Activated T-helper 1 cell treated with anti-CD3 and anti-CD28 coated beads, Interleukin-12 subunit alpha, Interleukin-12 subunit beta, Interleukin-2, Interleukin-4 antibody, amounts not matched to agents 30 ng/mL and 10 ng/mL and 1 ng/mL, durations not matched to agents 14 hours and 24 hours and 36 hours (primary cell): ENCODE measurements at regions of chr6 and their contacts with region 1.

Region 1: DNA sequence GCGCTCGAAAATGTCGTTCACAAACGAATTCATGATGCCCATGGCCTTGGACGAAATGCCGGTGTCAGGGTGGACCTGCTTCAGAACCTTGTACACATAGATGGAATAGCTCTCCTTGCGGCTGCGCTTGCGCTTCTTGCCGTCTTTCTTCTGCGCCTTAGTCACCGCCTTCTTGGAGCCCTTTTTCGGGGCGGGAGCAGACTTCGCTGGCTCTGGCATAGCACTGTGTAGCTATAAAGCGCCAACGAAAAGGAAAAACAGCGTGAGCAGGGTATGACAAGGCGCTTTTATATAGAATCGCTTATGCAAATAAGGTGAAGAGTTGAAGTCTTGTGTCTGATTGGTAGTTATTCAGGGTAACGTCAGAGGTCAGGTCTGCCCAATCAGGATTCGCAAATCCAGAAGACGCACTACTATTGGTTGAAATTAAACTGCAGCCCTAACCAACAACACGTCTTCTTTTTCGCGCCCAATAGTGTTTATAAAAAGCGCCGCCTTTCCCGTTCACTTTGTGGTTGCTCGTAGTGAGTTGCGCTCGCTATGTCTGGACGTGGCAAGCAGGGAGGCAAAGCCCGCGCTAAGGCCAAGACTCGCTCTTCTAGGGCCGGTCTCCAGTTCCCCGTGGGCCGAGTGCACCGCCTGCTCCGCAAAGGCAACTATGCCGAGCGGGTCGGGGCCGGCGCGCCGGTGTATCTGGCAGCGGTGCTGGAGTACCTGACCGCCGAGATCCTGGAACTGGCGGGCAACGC is 114.8 kb upstream of the PRSS16 start:
- DNase-seq: peak; percentile 92
- H3K4me3 Mint-ChIP-seq: no peak overlapping the region
- H3K27ac Mint-ChIP-seq: no peak overlapping the region
- H3K4me1 Mint-ChIP-seq: peaks cover 34% of the 10 kb centered on the region
- H3K27me3 Mint-ChIP-seq: no peaks in the 10 kb centered on the region

Region 2: GRCh38 chr6:26122793-26123674 is 1009.7 kb before region 1 on chr6:
- intact Hi-C with region 1: loop called (anchors 1 kb)
- DNase-seq: peak; percentile 86
- H3K4me3 Mint-ChIP-seq: peak overlapping the region; percentile 99
- H3K27ac Mint-ChIP-seq: peak overlapping the region; percentile 100
- H3K4me1 Mint-ChIP-seq: peaks cover 49% of the 10 kb centered on the region
- H3K27me3 Mint-ChIP-seq: peaks cover 3% of the 10 kb centered on the region

Region 3: GRCh38 chr6:26596579-26597388 is 535.9 kb before region 1 on chr6 and contains the start of gene ABT1:
- intact Hi-C with region 1: loop called (anchors 2 kb)
- DNase-seq: peak; percentile 97
- H3K4me3 Mint-ChIP-seq: no peak within 1 kb of the TSS
- H3K27ac Mint-ChIP-seq: no peak within 1 kb of the TSS
- H3K4me1 Mint-ChIP-seq: peaks cover 39% of the 10 kb centered on the region
- H3K27me3 Mint-ChIP-seq: peaks cover 27% of the 10 kb centered on the region
- total RNA-seq, gene ABT1: 32.6 and 32.9 TPM in 2 replicates

Region 4: DNA sequence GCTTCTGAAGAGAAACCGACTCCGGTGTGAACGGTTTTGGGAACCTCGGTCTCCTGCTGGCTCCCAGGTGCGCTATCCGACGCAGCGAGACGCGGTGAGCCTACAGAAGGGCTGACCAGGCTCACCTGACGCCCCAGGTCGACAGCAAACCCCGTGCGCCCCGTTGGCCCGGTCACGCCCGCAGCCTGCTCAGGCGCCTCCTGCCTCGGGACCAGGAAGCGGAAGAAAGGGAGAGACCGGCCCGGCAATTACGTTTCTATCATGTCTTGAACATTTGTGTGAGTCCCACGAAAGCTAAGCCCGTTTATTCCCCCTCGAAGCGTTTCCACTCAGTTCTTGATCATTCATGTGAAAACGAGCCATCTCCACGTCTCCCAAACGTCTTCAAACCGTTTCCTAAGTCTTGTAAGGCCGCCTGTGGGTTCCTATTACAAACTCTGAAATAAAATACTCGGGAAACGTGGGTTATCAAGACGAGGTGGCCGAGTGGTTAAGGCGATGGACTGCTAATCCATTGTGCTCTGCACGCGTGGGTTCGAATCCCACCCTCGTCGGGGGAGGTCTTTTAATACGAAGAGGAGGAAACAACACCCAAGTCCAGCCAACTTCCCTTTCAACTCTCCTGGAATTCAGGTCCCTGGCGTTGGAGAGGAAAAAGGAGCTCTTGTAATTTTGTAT is 35.7 kb before region 1 on chr6:
- intact Hi-C with region 1: no loop called
- DNase-seq: no peak
- H3K4me3 Mint-ChIP-seq: peak overlapping the region; percentile 80
- H3K27ac Mint-ChIP-seq: peak overlapping the region; percentile 58
- H3K4me1 Mint-ChIP-seq: peaks cover 23% of the 10 kb centered on the region
- H3K27me3 Mint-ChIP-seq: peaks cover 46% of the 10 kb centered on the region

Region 5: GRCh38 chr6:27177485-27178406 is 45.0 kb after region 1 on chr6:
- intact Hi-C with region 1: loop called (anchors 1 kb)
- DNase-seq: peak; percentile 66
- H3K4me3 Mint-ChIP-seq: peak overlapping the region; percentile 95
- H3K27ac Mint-ChIP-seq: peak overlapping the region; percentile 93
- H3K4me1 Mint-ChIP-seq: peaks cover 7% of the 10 kb centered on the region
- H3K27me3 Mint-ChIP-seq: peaks cover 36% of the 10 kb centered on the region

Region 6: GRCh38 chr6:27809939-27810767 is 677.4 kb after region 1 on chr6:
- intact Hi-C with region 1: loop called (anchors 1 kb)
- DNase-seq: peak; percentile 83
- H3K4me3 Mint-ChIP-seq: peak overlapping the region; percentile 91
- H3K27ac Mint-ChIP-seq: peak overlapping the region; percentile 96
- H3K4me1 Mint-ChIP-seq: peaks cover 78% of the 10 kb centered on the region
- H3K27me3 Mint-ChIP-seq: no peaks in the 10 kb centered on the region

Region 7: GRCh38 chr6:27871924-27872638 is 739.4 kb after region 1 on chr6:
- intact Hi-C with region 1: loop called (anchors 2 kb)
- DNase-seq: peak; percentile 87
- H3K4me3 Mint-ChIP-seq: peak overlapping the region; percentile 88
- H3K27ac Mint-ChIP-seq: peak overlapping the region; percentile 96
- H3K4me1 Mint-ChIP-seq: peaks cover 63% of the 10 kb centered on the region
- H3K27me3 Mint-ChIP-seq: no peaks in the 10 kb centered on the region